ENCODE measurements at regions of chr12 and their contacts with region 1.

Region 1: DNA sequence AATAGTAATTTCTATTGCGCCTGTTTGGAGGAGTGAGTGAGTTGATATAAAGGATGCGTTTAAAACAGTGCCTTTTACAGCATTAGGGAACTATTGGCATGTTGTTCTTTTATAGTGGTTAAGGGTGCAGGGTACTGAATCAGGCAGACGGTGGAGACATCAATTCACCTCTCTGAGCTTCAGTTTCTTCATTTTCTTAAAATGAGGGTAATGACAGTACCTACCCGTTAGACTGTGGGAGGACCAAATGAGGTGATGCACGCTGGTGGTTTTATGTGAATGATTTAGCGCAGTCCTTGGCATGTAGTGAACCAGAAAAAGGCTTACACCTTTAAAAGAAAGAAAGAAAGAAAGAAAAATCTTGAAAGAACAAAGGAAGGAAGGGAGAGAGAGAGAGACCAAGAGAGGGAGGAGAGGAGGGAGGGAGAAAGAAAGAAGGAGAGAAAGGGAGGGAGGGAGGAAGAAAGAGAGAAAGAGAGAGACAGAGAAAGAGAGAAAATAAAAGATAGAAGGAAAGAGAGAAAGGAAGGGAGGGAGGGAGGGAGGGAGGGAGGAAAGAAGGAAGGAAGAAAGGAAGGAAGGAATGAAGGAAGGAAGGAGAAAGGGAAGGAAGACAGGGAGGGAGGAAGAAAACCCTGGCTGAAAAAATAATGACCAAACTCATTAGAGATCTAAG is 22.2 kb upstream of the CCND2 start:
- DNase-seq: no peak
- ATAC-seq: no peak

Region 2: GRCh38 chr12:3789838-3790237 is 461.5 kb before region 1 on chr12:
- intact Hi-C with region 1: no loop called
- DNase-seq: no peak
- ATAC-seq: no peak

Region 3: GRCh38 chr12:4068981-4069669 is 182.2 kb before region 1 on chr12:
- intact Hi-C with region 1: no loop called
- DNase-seq: no peak
- ATAC-seq: no peak

Region 4: GRCh38 chr12:4107436-4107878 is 143.9 kb before region 1 on chr12:
- intact Hi-C with region 1: loop called (anchors 5 kb)
- DNase-seq: no peak
- ATAC-seq: peak; percentile 62

Region 5: DNA sequence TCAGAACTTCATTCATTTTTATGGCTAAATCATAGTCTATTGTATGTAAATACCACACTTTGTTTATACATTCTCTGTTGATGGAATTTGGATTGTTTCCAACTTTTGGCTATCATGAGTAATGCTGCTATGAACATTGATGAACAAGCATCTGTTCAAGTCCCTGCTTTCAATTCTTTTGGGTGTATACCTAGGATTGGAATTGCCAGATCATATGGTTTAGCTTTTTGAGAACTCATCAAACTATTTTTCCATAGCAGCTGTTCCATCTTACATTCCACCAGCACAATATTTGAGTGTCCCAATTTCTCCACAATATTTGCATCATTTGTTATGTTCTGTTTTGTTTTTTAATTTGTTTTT is 30.1 kb before region 1 on chr12:
- intact Hi-C with region 1: no loop called
- DNase-seq: no peak
- ATAC-seq: no peak

Measured in Right ventricle myocardium inferior (tissue), 1 donor.